IMR-90 (cell line): ENCODE measurements at regions of chr7 and their contacts with region 1.

Region 1: GRCh38 chr7:139777948-139778841 is at the start of gene HIPK2:
- DNase-seq: peak; percentile 73
- ATAC-seq: peak; percentile 79
- H3K4me3 ChIP-seq: peak within 1 kb of the TSS; percentile 98
- H3K27ac ChIP-seq: peak within 1 kb of the TSS; percentile 99
- H3K4me1 ChIP-seq: peaks cover 16% of the 10 kb centered on the region
- H3K27me3 ChIP-seq: no peaks in the 10 kb centered on the region
- CTCF ChIP-seq: no peak
- POLR2A ChIP-seq: no peak; the same call in 1 of the 2 replicates
- RAD21 ChIP-seq: peak; percentile 24
- total RNA-seq, gene HIPK2: 21.7 and 22.0 TPM in 2 replicates

Region 2: DNA sequence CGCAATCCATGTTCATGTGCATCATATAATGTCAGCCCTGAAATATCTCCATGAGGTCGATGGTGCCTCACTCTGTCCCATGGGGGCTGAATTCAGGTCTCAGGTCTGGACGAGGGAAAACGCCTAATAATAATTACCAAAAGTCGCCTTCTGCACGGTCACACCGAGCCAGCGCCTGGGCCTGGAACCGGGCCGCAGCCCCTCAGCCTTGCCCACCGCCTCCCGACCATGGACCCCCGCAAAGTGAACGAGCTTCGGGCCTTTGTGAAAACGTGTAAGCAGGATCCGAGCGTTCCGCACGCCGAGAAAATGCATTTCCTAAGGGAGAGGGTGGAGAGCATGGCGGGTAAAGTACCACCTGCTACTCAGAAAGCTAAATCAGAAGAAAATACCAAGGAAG is 276.0 kb before region 1 on chr7:
- CTCF ChIA-PET with region 1: no interaction called
- POLR2A ChIA-PET with region 1: no interaction called
- dilution Hi-C with region 1: no loop called
- in situ Hi-C with region 1: no loop called
- intact Hi-C with region 1: loop called (anchors 1 kb)
- DNase-seq: no peak
- ATAC-seq: no peak
- H3K4me3 ChIP-seq: no peak overlapping the region
- H3K27ac ChIP-seq: no peak overlapping the region
- H3K4me1 ChIP-seq: no peaks in the 10 kb centered on the region
- H3K27me3 ChIP-seq: peaks cover 19% of the 10 kb centered on the region
- CTCF ChIP-seq: no peak
- POLR2A ChIP-seq: no peak
- RAD21 ChIP-seq: no peak

Region 3: DNA sequence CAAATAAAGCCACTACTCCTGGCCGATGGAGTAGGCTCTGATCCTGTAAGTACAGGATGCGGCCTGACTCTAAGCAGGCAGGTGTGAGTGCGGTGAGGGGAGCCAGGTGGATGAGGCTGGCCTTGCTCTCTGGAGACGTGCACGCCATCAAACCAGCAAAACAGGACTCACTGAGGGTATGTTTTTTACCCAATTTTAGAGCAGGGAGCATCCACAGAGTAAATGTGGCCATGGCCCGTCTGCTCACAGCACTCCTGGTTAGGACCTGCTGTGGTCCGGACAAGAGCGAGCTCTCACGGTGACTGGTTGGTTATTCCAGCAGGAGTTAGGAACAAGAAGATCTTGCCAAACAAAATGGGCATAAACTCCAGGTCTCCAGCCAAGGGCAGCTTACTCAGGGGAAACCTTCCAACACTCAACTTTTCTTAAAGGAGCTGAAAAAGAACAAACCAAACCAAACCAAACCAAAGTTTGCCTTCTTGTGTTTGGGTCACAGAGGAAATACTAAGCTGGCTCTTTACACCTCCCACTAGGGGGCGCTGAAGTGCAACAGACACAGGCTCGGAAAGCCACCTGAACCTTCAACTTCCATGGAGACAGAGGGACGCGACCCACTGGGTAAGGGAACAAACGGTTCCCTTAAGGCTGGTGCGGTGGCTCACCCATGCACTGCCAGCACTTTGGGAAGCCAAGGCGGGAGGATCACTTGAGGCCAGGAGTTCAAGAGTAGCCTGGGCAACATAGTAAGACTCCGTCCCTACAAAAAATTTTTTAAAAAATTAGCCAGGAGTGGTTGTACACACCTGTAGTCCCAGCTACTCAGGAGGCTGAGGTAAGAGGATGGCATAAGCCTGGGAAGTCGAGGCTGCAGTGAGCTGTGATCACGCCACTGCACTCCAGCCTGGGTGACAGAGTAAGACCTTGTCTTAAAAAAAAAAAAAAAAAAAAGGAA is 132.3 kb before region 1 on chr7:
- CTCF ChIA-PET with region 1: interaction called, 4 read pairs
- POLR2A ChIA-PET with region 1: no interaction called
- dilution Hi-C with region 1: no loop called
- in situ Hi-C with region 1: loop called (anchors 10 kb)
- intact Hi-C with region 1: loop called (anchors 1 kb)
- DNase-seq: peak; percentile 80
- ATAC-seq: peak; percentile 63
- H3K4me3 ChIP-seq: no peak overlapping the region
- H3K27ac ChIP-seq: no peak overlapping the region
- H3K4me1 ChIP-seq: peaks cover 12% of the 10 kb centered on the region
- H3K27me3 ChIP-seq: no peaks in the 10 kb centered on the region
- CTCF ChIP-seq: peak; percentile 86
- POLR2A ChIP-seq: no peak
- RAD21 ChIP-seq: peak; percentile 92

Region 4: GRCh38 chr7:139871267-139871721 is 93.1 kb after region 1 on chr7:
- CTCF ChIA-PET with region 1: no interaction called
- POLR2A ChIA-PET with region 1: no interaction called
- dilution Hi-C with region 1: no loop called
- in situ Hi-C with region 1: no loop called
- intact Hi-C with region 1: loop called (anchors 5 kb)
- DNase-seq: peak; percentile 78
- ATAC-seq: peak; percentile 88
- H3K4me3 ChIP-seq: no peak overlapping the region
- H3K27ac ChIP-seq: peak overlapping the region; percentile 87; the same call in 1 of the 2 replicates
- H3K4me1 ChIP-seq: peaks cover 13% of the 10 kb centered on the region
- H3K27me3 ChIP-seq: no peaks in the 10 kb centered on the region
- CTCF ChIP-seq: no peak
- POLR2A ChIP-seq: no peak
- RAD21 ChIP-seq: no peak

Region 5: GRCh38 chr7:139958599-139959297 is 180.6 kb after region 1 on chr7:
- CTCF ChIA-PET with region 1: no interaction called
- POLR2A ChIA-PET with region 1: no interaction called
- dilution Hi-C with region 1: no loop called
- in situ Hi-C with region 1: no loop called
- intact Hi-C with region 1: loop called (anchors 2 kb)
- DNase-seq: peak; percentile 98
- ATAC-seq: peak; percentile 90
- H3K4me3 ChIP-seq: no peak overlapping the region
- H3K27ac ChIP-seq: peak overlapping the region; percentile 97
- H3K4me1 ChIP-seq: peaks cover 19% of the 10 kb centered on the region
- H3K27me3 ChIP-seq: no peaks in the 10 kb centered on the region; the same call in 1 of the 2 replicates
- CTCF ChIP-seq: no peak
- POLR2A ChIP-seq: no peak
- RAD21 ChIP-seq: no peak

Region 6: GRCh38 chr7:140003913-140004382 is 225.8 kb after region 1 on chr7:
- CTCF ChIA-PET with region 1: interaction called, 3 read pairs
- POLR2A ChIA-PET with region 1: no interaction called
- dilution Hi-C with region 1: no loop called
- in situ Hi-C with region 1: loop called (anchors 5 kb)
- intact Hi-C with region 1: loop called (anchors 1 kb)
- DNase-seq: peak; percentile 75
- ATAC-seq: peak; percentile 49
- H3K4me3 ChIP-seq: no peak overlapping the region
- H3K27ac ChIP-seq: no peak overlapping the region
- H3K4me1 ChIP-seq: peaks cover 2% of the 10 kb centered on the region; the same call in 1 of the 2 replicates
- H3K27me3 ChIP-seq: no peaks in the 10 kb centered on the region
- CTCF ChIP-seq: peak; percentile 79
- POLR2A ChIP-seq: no peak
- RAD21 ChIP-seq: peak; percentile 81

Region 7: DNA sequence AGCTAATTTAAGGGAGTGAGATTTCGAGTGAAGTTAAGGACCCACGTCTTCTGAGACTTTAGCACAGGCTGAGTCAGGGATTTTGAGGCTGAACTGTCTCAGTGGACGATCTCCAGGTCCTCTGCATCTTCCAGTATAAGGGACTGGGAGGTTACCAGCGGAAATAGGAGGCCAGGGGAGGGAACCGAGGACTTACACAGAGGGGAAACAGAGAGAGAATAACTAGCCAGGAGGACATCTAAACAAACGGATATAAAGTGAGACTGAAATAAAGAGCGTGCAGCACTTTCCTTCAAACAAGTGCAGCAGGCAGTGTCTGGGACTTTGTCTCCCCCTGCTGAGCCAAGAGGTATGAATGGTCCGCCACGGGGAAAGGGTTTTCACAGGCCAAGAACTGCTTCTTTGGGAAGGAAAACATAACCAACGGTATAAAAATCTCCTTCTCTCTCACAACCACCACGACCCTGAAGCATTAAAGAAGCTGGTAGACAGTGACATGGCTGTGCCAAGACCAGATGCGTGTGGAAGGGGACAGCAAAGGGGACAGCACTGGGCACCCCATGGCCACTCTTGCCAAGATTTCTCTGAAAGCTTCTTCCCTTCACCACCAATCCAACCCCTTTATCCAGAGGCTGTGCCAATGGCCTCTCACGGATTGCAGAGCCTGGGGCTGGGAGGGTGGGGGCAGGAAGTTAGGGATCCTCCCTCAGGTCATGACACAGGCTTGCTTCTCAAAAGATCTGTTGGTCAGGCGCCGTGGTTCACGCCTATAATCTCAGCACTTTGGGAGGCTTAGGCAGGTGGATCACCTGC is 548.1 kb after region 1 on chr7:
- CTCF ChIA-PET with region 1: no interaction called
- POLR2A ChIA-PET with region 1: no interaction called
- dilution Hi-C with region 1: no loop called
- in situ Hi-C with region 1: no loop called
- intact Hi-C with region 1: loop called (anchors 5 kb)
- DNase-seq: peak; percentile 73
- ATAC-seq: peak; percentile 99
- H3K4me3 ChIP-seq: no peak overlapping the region
- H3K27ac ChIP-seq: no peak overlapping the region
- H3K4me1 ChIP-seq: no peaks in the 10 kb centered on the region
- H3K27me3 ChIP-seq: no peaks in the 10 kb centered on the region
- CTCF ChIP-seq: peak; percentile 92
- POLR2A ChIP-seq: peak; percentile 46; the same call in 1 of the 2 replicates
- RAD21 ChIP-seq: peak; percentile 92